Spleen (tissue), 13 donors: ENCODE measurements at regions of chr9 and their contacts with region 1.

Region 1: GRCh38 chr9:129783516-129784361 is 19.2 kb upstream of the TOR1B start:
- DNase-seq: peak; percentile 84
- H3K4me3 ChIP-seq: no peak overlapping the region
- H3K27ac ChIP-seq: no peak overlapping the region
- H3K4me1 ChIP-seq: peaks cover 0 to 13% (median 8%) of the 10 kb centered on the region in 6 donors
- H3K27me3 ChIP-seq: peaks cover 0 to 20% (median 0%) of the 10 kb centered on the region in 7 donors
- CTCF ChIP-seq: peak; percentile 86 to 99 (median 93)
- POLR2A ChIP-seq: no peak

Region 2: DNA sequence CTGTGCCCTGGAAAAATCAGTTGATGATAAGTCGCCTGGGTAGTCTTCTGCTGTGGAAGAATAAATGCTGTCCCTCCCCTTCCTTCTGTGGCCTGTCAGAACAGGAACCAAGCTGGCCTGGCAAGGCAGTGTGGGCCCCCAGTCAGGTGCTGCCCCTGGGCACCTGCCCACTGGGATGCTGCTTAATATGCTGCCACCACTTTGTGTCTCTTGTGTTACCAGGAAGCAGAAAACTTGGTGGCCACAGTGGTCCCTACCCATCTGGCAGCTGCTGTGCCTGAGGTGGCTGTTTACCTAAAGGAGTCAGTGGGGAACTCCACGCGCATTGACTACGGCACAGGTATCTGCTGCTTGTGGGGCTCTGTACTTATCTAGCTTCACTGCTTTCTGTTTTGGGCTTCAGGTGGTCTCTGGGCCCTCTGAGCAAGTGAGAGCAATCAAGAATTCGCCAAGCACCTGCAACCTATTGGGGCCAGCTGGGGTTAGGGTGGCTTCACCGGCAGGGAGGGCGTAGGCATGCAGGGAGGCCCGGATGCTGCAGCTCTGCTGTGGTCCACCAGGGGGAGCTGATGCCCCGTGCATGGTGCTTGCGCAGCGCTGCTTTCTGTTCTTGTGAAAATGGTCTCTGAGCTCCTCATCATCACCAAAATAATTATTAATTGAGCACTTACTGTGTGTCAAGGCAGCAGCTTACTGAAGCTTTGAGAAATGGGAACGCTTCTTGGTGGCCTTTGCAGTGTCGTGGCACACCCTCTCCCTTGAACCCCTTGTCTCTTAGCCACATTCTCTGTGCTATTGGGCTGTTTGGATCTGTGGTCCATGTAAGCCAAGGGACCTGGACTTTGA is 652.2 kb before region 1 on chr9:
- intact Hi-C with region 1: loop called (anchors 5 kb)
- DNase-seq: peak; percentile 95
- H3K4me3 ChIP-seq: no peak overlapping the region
- H3K27ac ChIP-seq: peak overlapping the region in 4 of 8 donors; percentile 15 to 45 (median 30)
- H3K4me1 ChIP-seq: peaks cover 0 to 29% (median 15%) of the 10 kb centered on the region in 6 donors
- H3K27me3 ChIP-seq: no peaks in the 10 kb centered on the region
- CTCF ChIP-seq: peak; percentile 94 to 99 (median 99)
- POLR2A ChIP-seq: peak in 1 of 3 donors; percentile 7

Region 3: GRCh38 chr9:129641746-129642513 is 141.8 kb before region 1 on chr9 and contains the start of gene ASB6:
- intact Hi-C with region 1: loop called (anchors 10 kb)
- DNase-seq: peak; percentile 99
- H3K4me3 ChIP-seq: peak within 1 kb of the TSS; percentile 67 to 98 (median 94)
- H3K27ac ChIP-seq: peak within 1 kb of the TSS; percentile 80 to 92 (median 88)
- H3K4me1 ChIP-seq: peaks cover 15 to 57% (median 38%) of the 10 kb centered on the region in 6 donors
- H3K27me3 ChIP-seq: no peaks in the 10 kb centered on the region
- CTCF ChIP-seq: peak; percentile 100
- POLR2A ChIP-seq: peak in 2 of 3 donors; percentile 36 to 55
- total RNA-seq, gene ASB6: 17.2 to 30.8 (median 22.3) TPM

Region 4: GRCh38 chr9:129737479-129738274 is 46.1 kb before region 1 on chr9:
- intact Hi-C with region 1: loop called (anchors 2 kb)
- DNase-seq: peak; percentile 94
- H3K4me3 ChIP-seq: peak overlapping the region; percentile 44 to 78 (median 56)
- H3K27ac ChIP-seq: peak overlapping the region in 7 of 8 donors; percentile 61 to 84 (median 74)
- H3K4me1 ChIP-seq: peaks cover 0 to 18% (median 12%) of the 10 kb centered on the region in 6 donors
- H3K27me3 ChIP-seq: peaks cover 0 to 22% (median 0%) of the 10 kb centered on the region in 7 donors
- CTCF ChIP-seq: peak; percentile 84 to 99 (median 97)
- POLR2A ChIP-seq: no peak